Heart left ventricle (tissue), 16 donors: ENCODE measurements at regions of chr20 and their contacts with region 1.

Region 1: GRCh38 chr20:41339507-41340326 is 904 bp upstream of the LPIN3 start:
- DNase-seq: peak; percentile 82 to 91 (median 85)
- ATAC-seq: peak; percentile 74 to 83 (median 79)
- H3K4me3 ChIP-seq: peak overlapping the region in 11 of 12 donors; percentile 28 to 70 (median 60)
- H3K27ac ChIP-seq: peak overlapping the region; percentile 66 to 89 (median 74)
- H3K4me1 ChIP-seq: peaks cover 0 to 51% (median 20%) of the 10 kb centered on the region in 12 donors
- H3K27me3 ChIP-seq: peaks cover 0 to 4% (median 0%) of the 10 kb centered on the region in 9 donors
- CTCF ChIP-seq: peak; percentile 97 to 100 (median 98)
- POLR2A ChIP-seq: no peak

Region 2: GRCh38 chr20:40970201-40970600 is 369.5 kb before region 1 on chr20:
- intact Hi-C with region 1: loop called in 2 of 10 experiments (anchors 10 kb)
- DNase-seq: no peak
- ATAC-seq: no peak
- H3K4me3 ChIP-seq: no peak overlapping the region
- H3K27ac ChIP-seq: no peak overlapping the region
- H3K4me1 ChIP-seq: peaks cover 0 to 8% (median 0%) of the 10 kb centered on the region in 12 donors
- H3K27me3 ChIP-seq: no peaks in the 10 kb centered on the region
- CTCF ChIP-seq: no peak
- POLR2A ChIP-seq: no peak

Region 3: GRCh38 chr20:41136680-41137613 is 202.8 kb before region 1 on chr20 and contains the start of gene PLCG1:
- intact Hi-C with region 1: loop called in 7 of 10 experiments (anchors 1 to 10 kb)
- DNase-seq: peak; percentile 91 to 95 (median 93)
- ATAC-seq: peak; percentile 76 to 89 (median 85)
- H3K4me3 ChIP-seq: peak within 1 kb of the TSS; percentile 56 to 100 (median 94)
- H3K27ac ChIP-seq: peak within 1 kb of the TSS; percentile 89 to 100 (median 98)
- H3K4me1 ChIP-seq: peaks cover 6 to 52% (median 43%) of the 10 kb centered on the region in 12 donors
- H3K27me3 ChIP-seq: peaks cover 0 to 4% (median 0%) of the 10 kb centered on the region in 9 donors
- CTCF ChIP-seq: peak in 1 of 12 donors; percentile 12
- POLR2A ChIP-seq: peak; percentile 38 to 85
- total RNA-seq, gene PLCG1: 32.5 to 72.2 (median 55.9) TPM

Region 4: DNA sequence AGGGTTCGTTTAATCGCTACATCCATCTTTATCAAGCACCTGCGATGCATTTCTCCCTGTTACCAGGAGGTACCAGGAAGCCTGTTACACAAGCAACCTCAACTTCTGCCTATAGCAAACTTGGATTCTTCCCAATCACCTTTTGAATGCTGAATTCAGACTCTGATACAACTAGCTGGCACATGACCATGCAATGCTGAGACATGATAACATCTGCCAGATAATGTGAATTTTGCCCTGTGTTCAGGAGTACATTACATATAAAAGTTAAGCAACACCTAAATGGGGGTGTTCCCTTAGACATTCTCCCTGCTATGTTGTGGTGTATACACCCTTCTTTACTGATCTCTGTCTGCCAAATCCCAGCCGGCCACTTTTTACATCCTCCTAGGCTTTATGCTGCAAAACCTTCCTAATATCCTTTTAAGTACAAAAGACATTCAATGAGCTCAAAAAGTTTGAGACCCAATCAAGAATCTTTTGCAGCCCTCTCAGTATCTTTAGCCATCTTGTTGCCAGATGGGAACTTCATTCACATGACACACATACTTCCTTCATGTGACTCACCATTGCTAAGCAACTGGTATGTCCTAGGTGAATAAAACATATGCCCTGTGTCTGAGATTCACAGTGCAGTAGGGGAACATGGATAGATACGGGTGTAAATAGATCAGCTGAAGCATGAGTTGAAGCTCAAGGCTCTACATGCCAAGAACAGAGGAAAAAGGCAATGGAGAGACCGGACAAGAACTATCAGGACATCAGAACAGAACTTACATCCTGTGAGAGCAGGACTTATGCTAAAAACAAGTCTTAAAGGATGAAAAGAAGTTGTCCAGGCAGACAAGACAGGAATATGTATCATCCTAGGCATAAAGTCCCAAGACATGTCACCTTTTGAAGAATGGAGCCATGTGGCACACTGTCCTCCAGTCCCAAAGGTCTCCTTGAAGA is 106.5 kb before region 1 on chr20:
- intact Hi-C with region 1: loop called in 6 of 10 experiments (anchors 1 to 5 kb)
- DNase-seq: no peak
- ATAC-seq: peak in 3 of 4 donors; percentile 35 to 62 (median 55)
- H3K4me3 ChIP-seq: peak overlapping the region in 3 of 12 donors; percentile 18 to 33 (median 31)
- H3K27ac ChIP-seq: peak overlapping the region; percentile 41 to 83 (median 76)
- H3K4me1 ChIP-seq: peaks cover 15 to 68% (median 50%) of the 10 kb centered on the region in 12 donors
- H3K27me3 ChIP-seq: no peaks in the 10 kb centered on the region
- CTCF ChIP-seq: no peak
- POLR2A ChIP-seq: no peak

Region 5: DNA sequence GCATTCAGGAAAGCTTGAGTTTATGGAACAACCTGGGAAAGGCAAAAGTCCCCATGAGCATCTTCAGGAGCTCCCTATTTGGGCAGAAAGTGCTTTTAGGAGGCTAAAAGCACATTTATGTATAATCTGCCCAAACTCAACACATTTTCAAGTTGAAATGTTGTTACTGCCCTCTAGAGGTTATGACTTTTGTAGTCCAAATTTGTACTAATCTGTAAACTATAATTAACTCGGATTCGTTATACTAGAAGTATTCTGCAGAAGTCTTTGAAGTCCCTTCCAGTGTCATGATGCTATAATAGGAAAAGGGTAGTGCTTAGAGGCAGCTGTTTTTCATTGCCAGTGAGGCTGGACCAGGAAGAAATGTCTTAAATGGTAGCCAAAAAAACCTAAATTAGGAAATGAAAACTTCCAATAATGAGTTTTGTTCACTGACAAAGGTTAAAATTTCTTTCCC is 71.7 kb after region 1 on chr20:
- intact Hi-C with region 1: loop called (anchors 2 to 5 kb)
- DNase-seq: no peak
- ATAC-seq: peak; percentile 69 to 87 (median 78)
- H3K4me3 ChIP-seq: no peak overlapping the region
- H3K27ac ChIP-seq: peak overlapping the region; percentile 67 to 89 (median 73)
- H3K4me1 ChIP-seq: peaks cover 3 to 55% (median 28%) of the 10 kb centered on the region in 12 donors
- H3K27me3 ChIP-seq: no peaks in the 10 kb centered on the region
- CTCF ChIP-seq: peak; percentile 30 to 68 (median 58)
- POLR2A ChIP-seq: no peak